Activated B cell treated with CpG ODN at 0.5 μM for 24 hours (primary cell): ENCODE measurements at regions of chr9 and their contacts with region 1.

Region 1: GRCh38 chr9:128218518-128219389 is 15.6 kb downstream of the DNM1 start:
- DNase-seq: peak; percentile 87
- ATAC-seq: peak; percentile 97
- H3K4me3 Mint-ChIP-seq: peak overlapping the region; percentile 81
- H3K27ac Mint-ChIP-seq: peak overlapping the region; percentile 19
- H3K4me1 Mint-ChIP-seq: peaks cover 11% of the 10 kb centered on the region
- H3K27me3 Mint-ChIP-seq: peaks cover 5% of the 10 kb centered on the region
- CTCF ChIP-seq: no peak

Region 2: DNA sequence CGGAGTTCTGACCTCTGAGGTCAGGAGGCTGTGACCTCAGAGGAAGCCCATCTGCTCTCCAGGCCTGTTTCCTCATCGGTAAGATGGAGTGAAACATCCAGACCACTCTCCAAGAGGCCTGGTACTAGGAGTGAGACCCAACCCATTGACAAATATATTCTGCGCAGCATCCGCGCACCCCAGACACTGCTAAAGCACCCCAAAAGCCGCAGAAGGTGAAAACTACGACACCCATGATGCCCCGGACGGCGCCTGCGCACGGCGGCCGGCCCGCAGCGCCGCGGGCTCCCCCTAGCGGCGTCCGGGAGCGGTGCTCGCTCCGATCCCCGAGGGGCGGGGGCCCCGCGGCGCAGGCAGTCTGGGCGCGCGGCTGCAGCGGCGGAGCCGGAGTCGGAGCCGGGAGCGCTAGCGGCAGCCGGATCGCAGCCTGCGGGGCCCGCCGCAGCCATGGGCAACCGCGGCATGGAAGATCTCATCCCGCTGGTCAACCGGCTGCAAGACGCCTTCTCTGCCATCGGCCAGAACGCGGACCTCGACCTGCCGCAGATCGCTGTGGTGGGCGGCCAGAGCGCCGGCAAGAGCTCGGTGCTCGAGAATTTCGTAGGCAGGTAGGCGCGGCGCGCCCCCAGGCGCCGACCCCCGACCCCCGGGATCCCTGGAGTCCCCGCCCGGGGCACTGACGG is 15.6 kb before region 1 on chr9 and contains the start of gene DNM1:
- CTCF ChIA-PET with region 1: no interaction called
- POLR2A ChIA-PET with region 1: no interaction called
- intact Hi-C with region 1: loop called (anchors 1 kb)
- DNase-seq: peak; percentile 78
- ATAC-seq: peak; percentile 98
- H3K4me3 Mint-ChIP-seq: peak within 1 kb of the TSS; percentile 85
- H3K27ac Mint-ChIP-seq: peak within 1 kb of the TSS; percentile 56
- H3K4me1 Mint-ChIP-seq: peaks cover 7% of the 10 kb centered on the region
- H3K27me3 Mint-ChIP-seq: peaks cover 18% of the 10 kb centered on the region
- CTCF ChIP-seq: peak; percentile 59
- total RNA-seq, gene DNM1: 0.81 and 0.86 TPM in 2 replicates

Region 3: GRCh38 chr9:128823903-128824406 is 605.2 kb after region 1 on chr9:
- CTCF ChIA-PET with region 1: no interaction called
- POLR2A ChIA-PET with region 1: interaction called, 11 read pairs
- intact Hi-C with region 1: no loop called
- DNase-seq: no peak
- ATAC-seq: no peak
- H3K4me3 Mint-ChIP-seq: no peak overlapping the region
- H3K27ac Mint-ChIP-seq: no peak overlapping the region
- H3K4me1 Mint-ChIP-seq: peaks cover 24% of the 10 kb centered on the region
- H3K27me3 Mint-ChIP-seq: no peaks in the 10 kb centered on the region
- CTCF ChIP-seq: no peak